Aorta (tissue), 5 donors: ENCODE measurements at regions of chr1 and their contacts with region 1.

Region 1: DNA sequence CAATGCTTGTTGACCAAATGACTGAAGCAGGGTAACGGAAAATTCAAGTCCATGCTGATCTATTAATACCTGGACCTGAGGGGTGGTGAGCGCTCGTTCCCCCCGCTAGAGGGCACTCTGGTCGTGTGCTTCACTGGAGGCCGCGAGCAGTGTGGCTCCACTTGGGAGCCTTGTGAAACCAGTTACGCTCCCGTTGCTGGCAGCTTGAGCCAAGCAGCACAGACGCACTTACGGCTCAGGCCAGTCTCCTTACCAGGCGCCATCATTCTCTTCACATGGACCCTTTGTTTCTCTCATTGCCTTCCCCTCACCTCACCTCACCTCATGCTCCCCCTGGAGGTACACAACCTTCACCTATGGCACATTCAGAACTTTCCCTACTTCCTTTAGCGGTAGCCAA is 49.7 kb upstream of the TSPAN2 start:
- DNase-seq: peak; percentile 92 to 94
- ATAC-seq: peak; percentile 91
- H3K4me3 ChIP-seq: no peak overlapping the region
- H3K27ac ChIP-seq: peak overlapping the region in 1 of 2 donors; percentile 19
- H3K4me1 ChIP-seq: peaks cover 3 to 9% of the 10 kb centered on the region in 2 donors
- H3K27me3 ChIP-seq: no peaks in the 10 kb centered on the region

Region 2: DNA sequence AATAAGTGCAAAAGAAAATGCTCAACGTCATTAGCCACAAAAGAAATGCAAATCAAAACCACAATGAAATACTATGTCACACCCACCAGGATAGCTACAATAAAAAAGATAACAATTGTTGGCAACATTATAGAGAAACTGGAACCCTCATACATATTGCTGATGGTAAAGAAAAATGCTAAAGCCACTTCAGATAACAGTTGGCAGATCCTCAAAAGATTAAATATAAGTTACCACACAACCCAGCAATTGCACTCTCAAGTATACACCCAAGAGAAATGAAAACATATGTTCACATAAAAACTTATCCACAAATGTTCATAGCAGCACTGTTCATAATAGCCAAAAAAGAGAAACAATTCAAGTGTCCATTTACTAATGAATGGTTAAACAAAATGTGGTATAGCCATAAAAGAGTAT is 648.7 kb before region 1 on chr1:
- intact Hi-C with region 1: no loop called
- DNase-seq: no peak
- ATAC-seq: no peak
- H3K4me3 ChIP-seq: no peak overlapping the region
- H3K27ac ChIP-seq: no peak overlapping the region
- H3K4me1 ChIP-seq: peaks cover 0 to 9% of the 10 kb centered on the region in 2 donors
- H3K27me3 ChIP-seq: no peaks in the 10 kb centered on the region

Region 3: DNA sequence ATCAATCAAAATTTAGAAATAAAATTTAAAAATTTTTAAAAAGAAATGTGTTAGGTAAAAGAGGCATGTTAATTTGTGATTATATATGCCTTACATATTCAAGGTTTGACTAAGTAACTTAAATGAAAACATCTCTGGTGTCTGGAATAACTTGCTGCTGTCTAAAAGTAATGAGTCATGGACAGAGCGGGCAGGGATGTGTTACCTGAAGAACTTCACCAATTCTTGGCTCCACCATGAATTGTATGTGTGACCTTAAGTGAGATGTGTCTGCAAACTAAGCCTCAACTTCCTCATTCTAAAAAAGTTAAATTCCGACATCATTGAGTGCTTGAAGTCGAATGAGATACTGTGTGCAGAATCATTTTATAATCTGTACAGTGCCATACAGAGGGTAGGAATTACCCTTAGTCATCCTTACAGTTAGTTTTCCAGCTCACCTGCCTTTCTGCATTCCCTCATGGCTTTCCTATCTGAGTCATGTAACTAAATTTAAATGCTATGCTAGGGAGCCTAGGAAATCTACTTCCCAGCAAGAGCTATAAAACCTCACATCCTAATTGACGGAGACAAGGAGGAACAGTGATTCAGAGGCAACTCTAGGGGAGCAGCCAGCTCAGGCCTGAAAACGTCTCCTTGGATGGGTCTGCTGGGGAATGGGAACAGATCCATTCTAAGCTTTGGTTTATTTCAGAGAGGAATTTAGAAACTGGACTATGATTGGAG is 51.0 kb after region 1 on chr1:
- intact Hi-C with region 1: loop called (anchors 2 to 5 kb)
- DNase-seq: no peak
- ATAC-seq: peak; percentile 78
- H3K4me3 ChIP-seq: no peak overlapping the region
- H3K27ac ChIP-seq: peak overlapping the region; percentile 61 to 77
- H3K4me1 ChIP-seq: peaks cover 0 to 6% of the 10 kb centered on the region in 2 donors
- H3K27me3 ChIP-seq: no peaks in the 10 kb centered on the region

Region 4: GRCh38 chr1:115337633-115338456 is 198.9 kb after region 1 on chr1 and contains the start of gene NGF:
- intact Hi-C with region 1: loop called (anchors 5 kb)
- DNase-seq: peak; percentile 81 to 92
- ATAC-seq: peak; percentile 90
- H3K4me3 ChIP-seq: peak within 1 kb of the TSS; percentile 43 to 54
- H3K27ac ChIP-seq: peak within 1 kb of the TSS in 1 of 2 donors; percentile 65
- H3K4me1 ChIP-seq: peaks cover 0 to 14% of the 10 kb centered on the region in 2 donors
- H3K27me3 ChIP-seq: no peaks in the 10 kb centered on the region
- total RNA-seq, gene NGF: 10.2 to 17.2 TPM

Region 5: DNA sequence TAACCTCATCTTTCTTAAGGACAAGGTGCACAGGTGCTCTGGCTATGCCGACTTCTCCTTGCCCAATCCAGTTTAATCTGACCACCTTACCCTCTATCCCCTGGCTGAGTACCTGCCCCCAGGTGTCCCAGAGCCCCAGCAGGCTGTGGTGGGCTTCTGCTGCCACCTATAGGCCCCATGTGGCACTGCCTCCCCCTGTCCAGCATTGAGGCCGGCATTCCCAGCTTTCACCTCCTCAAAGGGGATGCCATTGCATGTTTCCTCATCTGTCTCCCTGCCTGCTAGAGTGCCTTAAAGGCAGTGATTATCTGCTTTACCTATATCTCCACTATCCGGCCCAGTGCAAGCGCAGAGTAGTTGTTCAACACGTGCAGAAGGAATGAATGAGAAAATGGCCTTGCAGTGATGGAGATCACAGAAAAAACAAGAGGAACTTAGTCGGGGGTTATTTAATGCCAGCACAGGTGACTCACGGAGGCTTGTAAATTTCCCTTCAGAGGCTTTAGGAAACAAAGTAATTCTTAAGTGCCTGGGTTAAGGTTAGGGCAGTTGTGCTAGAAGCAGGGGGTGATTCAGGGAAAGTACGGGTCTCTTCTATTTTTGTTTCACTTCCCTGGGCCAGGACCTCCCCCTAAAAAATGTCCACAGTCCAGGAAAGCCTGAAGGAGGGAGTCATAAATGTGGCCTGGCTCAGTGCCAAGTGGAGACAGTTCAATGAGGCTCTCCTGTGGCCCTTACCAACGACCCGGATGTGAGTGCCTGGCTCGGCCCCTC is 330.9 kb after region 1 on chr1:
- intact Hi-C with region 1: loop called (anchors 2 to 5 kb)
- DNase-seq: peak in 1 of 2 donors; percentile 81
- ATAC-seq: peak; percentile 67
- H3K4me3 ChIP-seq: no peak overlapping the region
- H3K27ac ChIP-seq: no peak overlapping the region
- H3K4me1 ChIP-seq: no peaks in the 10 kb centered on the region
- H3K27me3 ChIP-seq: no peaks in the 10 kb centered on the region